GM18951 (cell line): ENCODE measurements at regions of chr2 and their contacts with region 1.

Region 1: DNA sequence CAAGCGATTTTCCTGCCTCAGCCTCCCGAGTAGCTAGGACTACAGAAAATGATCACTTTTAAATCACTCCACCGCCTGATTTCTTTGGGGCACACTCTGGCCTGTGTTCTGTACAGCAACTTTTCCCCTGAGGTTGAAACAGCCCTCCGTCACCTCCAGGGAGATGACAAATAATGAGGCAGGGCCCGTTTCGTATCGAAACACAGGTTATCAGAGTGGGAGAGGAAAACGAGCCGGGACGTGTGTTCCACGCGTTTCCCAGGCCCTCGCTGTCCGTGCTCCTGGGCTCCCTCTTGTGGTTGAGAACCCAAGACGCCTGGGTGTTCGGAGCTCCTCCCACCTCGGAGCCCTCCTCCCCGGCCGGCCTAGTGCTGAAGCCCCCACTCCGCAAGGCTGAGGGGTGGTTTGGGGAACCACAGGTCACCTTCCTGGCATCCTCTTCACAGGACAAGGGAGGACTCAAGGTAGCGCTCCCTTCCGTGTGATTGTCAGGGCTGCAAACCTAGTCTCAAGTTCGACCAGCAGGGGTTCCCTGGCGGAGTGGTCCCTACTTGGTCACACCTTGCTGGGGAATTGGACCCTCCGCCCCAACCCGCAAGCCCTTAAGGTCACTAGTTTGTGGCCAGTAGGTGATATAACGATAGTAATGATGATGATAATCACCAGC is 12.8 kb downstream of the ATP6V1B1 start:
- POLR2A ChIP-seq: no peak

Region 2: GRCh38 chr2:69565431-69565839 is 1383.0 kb before region 1 on chr2:
- in situ Hi-C with region 1: no loop called
- POLR2A ChIP-seq: no peak

Region 3: DNA sequence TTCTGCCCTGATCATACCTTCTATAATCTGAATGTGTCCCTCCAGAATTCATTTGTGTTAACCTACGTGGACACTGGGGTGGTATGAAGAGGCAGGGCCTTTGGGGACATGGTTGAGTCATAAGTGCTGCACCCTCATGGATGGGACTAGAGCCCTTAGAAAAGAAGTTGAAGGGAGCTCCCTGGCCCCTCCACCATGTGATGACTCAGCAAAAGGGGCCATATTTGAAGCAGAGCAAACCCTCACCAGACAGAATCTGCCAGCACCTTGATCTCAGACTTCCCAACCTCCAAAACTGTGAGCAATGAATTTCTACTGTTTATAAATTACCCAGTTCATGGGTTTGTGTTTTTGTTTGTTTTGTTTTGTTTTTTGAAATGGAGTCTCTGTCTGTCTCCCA is 79.5 kb before region 1 on chr2:
- in situ Hi-C with region 1: loop called (anchors 5 kb)
- POLR2A ChIP-seq: no peak